ENCODE measurements at regions of chr19 and their contacts with region 1.

Region 1: DNA sequence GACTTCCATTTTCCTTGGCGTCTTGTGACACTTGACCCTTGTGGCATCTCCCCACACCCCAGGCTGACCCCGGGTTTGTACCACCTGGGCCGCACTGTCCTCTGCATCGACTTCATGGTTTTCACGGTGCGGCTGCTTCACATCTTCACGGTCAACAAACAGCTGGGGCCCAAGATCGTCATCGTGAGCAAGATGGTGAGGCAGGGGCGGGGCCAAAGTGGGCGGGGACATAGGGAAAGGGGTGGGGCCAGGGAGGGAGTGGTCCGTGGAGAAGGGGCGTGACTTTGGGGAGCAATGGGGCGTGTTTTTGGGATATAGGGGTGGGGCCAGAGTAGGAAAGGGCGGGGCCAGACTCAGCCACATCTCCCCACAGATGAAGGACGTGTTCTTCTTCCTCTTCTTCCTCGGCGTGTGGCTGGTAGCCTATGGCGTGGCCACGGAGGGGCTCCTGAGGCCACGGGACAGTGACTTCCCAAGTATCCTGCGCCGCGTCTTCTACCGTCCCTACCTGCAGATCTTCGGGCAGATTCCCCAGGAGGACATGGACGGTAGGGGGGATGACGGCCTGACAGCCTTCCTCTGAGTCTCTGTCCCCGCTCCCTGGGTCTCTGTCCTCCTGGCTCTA is 42.8 kb downstream of the TRPM4 start:
- DNase-seq: peak; percentile 47 to 73
- ATAC-seq: peak; percentile 54

Region 2: DNA sequence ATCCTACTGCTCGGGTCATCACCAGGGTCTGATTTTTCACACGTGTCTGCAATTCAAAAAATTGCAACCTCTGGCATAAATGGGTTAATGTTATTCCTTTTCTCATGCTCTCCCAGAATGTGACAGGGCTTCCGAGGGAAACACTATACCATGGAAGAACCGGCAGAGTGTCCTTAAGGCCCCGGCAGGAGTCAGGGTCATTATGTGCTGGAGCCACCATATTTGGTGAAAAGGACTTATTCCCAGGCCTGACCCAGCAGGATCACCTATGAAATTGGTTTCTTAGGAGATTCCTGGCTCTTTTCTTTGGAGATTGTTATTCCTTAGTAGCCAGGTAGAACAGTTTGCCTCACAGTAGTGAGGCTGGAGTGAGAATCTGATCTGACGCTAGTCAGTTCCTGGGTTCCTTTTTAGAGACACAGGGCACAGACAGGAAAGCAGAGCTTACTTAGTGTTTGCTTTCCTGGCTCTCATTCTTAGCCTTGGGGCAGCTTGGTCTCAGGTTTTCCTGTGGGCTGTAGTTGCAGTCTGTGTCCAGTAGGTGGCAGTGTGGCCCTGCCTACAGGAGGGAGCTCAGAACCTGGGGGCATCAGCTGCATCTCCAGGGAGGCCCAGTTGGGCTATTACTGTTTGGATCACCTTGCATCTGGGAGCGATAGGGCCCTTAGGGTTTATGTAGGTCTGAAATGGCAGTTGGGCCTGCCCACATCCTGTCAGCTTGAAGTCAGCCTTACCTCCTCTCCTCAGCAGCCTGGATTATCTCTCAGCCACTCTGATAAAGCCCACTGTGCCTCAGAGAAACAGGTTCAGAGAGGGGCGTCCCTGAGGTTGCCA is 102.7 kb before region 1 on chr19:
- intact Hi-C with region 1: loop called (anchors 10 kb)
- DNase-seq: peak in 1 of 2 donors; percentile 67
- ATAC-seq: peak; percentile 79

Region 3: DNA sequence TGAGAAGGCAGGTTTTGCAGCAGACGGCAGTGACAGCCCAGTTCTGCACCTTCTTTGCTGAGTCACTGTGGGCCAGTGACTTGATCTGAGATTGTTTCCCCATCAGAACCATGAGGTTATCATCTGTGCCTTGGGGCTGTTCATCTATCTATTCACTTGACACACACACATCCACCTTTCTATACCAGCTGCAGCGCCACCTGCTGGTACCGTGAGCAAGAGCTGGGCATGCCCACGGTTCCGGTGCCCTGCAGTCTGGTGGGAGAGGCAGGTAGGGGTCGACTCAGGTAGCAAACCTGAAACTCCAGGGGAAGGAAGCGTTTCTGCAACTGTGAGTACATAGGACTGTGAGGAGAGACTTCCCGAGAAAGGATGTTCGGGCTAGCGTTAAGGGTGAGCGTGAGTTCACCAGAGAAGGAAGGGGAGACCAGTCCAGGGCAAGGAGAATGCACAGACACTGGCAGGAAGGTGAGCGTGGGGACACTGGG is 93.7 kb before region 1 on chr19:
- intact Hi-C with region 1: loop called in 1 of 2 experiments (anchors 10 kb)
- DNase-seq: peak in 1 of 2 donors; percentile 79
- ATAC-seq: peak; percentile 71